HEK293 (cell line): ENCODE measurements at regions of chr9 and their contacts with region 1.

Region 1: GRCh38 chr9:17810728-17811571 is 232.1 kb downstream of the SH3GL2 start:
- H3K4me3 ChIP-seq: no peak overlapping the region
- H3K27ac ChIP-seq: no peak overlapping the region
- H3K4me1 ChIP-seq: no peaks in the 10 kb centered on the region
- CTCF ChIP-seq: peak; percentile 44; the same call in 1 of the 2 replicates

Region 2: DNA sequence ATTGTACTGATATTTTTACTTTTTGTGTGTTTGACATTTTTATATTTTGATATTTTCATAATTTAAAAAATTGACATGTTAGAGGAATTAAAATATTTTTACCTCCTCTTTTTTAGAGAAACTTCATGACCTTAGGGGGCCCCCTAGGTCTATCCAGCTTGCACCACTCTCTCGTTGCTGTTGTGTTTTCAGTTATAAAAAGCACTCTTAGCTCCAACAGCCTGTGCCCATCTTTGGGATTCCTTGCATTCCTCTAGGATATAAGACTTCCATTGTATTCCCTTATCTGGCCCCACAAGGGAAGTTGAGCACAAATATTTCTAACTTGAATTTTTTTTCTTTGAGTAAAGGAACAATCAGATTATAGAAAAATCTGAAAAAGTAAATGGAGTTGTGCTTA is 13.2 kb after region 1 on chr9:
- CTCF ChIA-PET with region 1: interaction called, 10 read pairs
- POLR2A ChIA-PET with region 1: no interaction called
- H3K4me3 ChIP-seq: no peak overlapping the region
- H3K27ac ChIP-seq: no peak overlapping the region
- H3K4me1 ChIP-seq: no peaks in the 10 kb centered on the region
- CTCF ChIP-seq: no peak

Region 3: GRCh38 chr9:18208154-18209059 is 397.5 kb after region 1 on chr9:
- CTCF ChIA-PET with region 1: interaction called, 149 read pairs
- POLR2A ChIA-PET with region 1: interaction called, 3 read pairs
- H3K4me3 ChIP-seq: no peak overlapping the region
- H3K27ac ChIP-seq: no peak overlapping the region
- H3K4me1 ChIP-seq: no peaks in the 10 kb centered on the region
- CTCF ChIP-seq: peak; percentile 36; the same call in 1 of the 2 replicates

Region 4: DNA sequence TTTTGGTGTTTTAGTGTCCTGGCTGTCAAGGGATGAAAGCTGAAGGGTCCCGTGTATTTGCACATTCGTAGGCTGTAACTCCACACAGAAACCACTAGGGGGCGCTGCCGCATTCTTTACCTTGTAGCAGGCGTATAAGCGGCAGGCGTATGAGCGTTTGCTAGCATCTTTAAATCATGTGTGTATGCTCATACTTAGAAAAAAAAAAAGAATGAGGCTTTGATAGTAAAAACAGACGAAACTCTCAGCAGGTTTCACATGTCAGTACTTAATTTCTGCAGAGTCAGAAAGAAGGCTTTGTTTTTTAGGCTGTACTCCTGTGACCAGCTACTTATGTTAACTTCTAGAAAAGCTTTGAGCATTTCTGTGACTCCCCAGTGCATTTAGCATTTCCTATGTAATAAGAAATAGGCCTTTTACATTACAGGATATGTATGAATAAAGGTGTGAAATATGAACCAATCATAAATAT is 444.2 kb after region 1 on chr9:
- CTCF ChIA-PET with region 1: interaction called, 10 read pairs
- POLR2A ChIA-PET with region 1: no interaction called
- H3K4me3 ChIP-seq: no peak overlapping the region
- H3K27ac ChIP-seq: no peak overlapping the region
- H3K4me1 ChIP-seq: no peaks in the 10 kb centered on the region
- CTCF ChIP-seq: peak; percentile 34; the same call in 1 of the 2 replicates